Activated T-helper 2 cell treated with anti-CD3 and anti-CD28 coated beads, Interferon-gamma antibody, Interleukin-2, Interleukin-4, amounts not matched to agents 10 μg/mL and 5 μg/mL and 100 μg/mL, durations not matched to agents 14 hours and 24 hours and 36 hours (primary cell): ENCODE measurements at regions of chr1 and their contacts with region 1.

Region 1: GRCh38 chr1:211323156-211324063 is 3.2 kb upstream of the TRAF5 start:
- DNase-seq: peak; percentile 59
- H3K4me3 Mint-ChIP-seq: no peak overlapping the region
- H3K27ac Mint-ChIP-seq: peak overlapping the region; percentile 74
- H3K4me1 Mint-ChIP-seq: peaks cover 57% of the 10 kb centered on the region
- H3K27me3 Mint-ChIP-seq: no peaks in the 10 kb centered on the region

Region 2: GRCh38 chr1:211281320-211282022 is 41.9 kb before region 1 on chr1:
- intact Hi-C with region 1: loop called (anchors 1 kb)
- DNase-seq: no peak
- H3K4me3 Mint-ChIP-seq: no peak overlapping the region
- H3K27ac Mint-ChIP-seq: no peak overlapping the region
- H3K4me1 Mint-ChIP-seq: peaks cover 2% of the 10 kb centered on the region
- H3K27me3 Mint-ChIP-seq: no peaks in the 10 kb centered on the region

Region 3: DNA sequence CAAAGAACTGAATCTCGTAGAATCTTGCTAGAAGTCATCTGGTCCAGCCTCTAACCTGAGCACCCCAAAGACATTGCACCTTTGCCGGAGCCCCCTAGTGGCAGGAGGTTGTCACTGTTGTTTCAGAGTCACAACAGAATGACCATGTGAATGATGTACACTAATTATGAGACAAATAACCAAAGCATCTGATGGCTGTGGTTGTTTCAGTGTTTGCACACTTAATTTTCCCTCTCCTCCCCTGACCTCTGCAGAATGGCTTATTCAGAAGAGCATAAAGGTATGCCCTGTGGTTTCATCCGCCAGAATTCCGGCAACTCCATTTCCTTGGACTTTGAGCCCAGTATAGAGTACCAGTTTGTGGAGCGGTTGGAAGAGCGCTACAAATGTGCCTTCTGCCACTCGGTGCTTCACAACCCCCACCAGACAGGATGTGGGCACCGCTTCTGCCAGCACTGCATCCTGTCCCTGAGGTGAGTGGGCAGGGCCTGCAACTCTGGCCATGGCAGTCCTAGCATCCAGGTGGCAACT is 29.6 kb after region 1 on chr1:
- intact Hi-C with region 1: loop called (anchors 1 kb)
- DNase-seq: no peak
- H3K4me3 Mint-ChIP-seq: peak overlapping the region; percentile 55
- H3K27ac Mint-ChIP-seq: peak overlapping the region; percentile 62
- H3K4me1 Mint-ChIP-seq: peaks cover 55% of the 10 kb centered on the region
- H3K27me3 Mint-ChIP-seq: no peaks in the 10 kb centered on the region

Region 4: GRCh38 chr1:211476200-211476849 is 152.9 kb after region 1 on chr1:
- intact Hi-C with region 1: loop called (anchors 1 kb)
- DNase-seq: peak; percentile 57
- H3K4me3 Mint-ChIP-seq: no peak overlapping the region
- H3K27ac Mint-ChIP-seq: no peak overlapping the region
- H3K4me1 Mint-ChIP-seq: peaks cover 15% of the 10 kb centered on the region
- H3K27me3 Mint-ChIP-seq: peaks cover 36% of the 10 kb centered on the region

Region 5: GRCh38 chr1:211654838-211655787 is 331.7 kb after region 1 on chr1:
- intact Hi-C with region 1: loop called (anchors 1 kb)
- DNase-seq: peak; percentile 72
- H3K4me3 Mint-ChIP-seq: no peak overlapping the region
- H3K27ac Mint-ChIP-seq: no peak overlapping the region
- H3K4me1 Mint-ChIP-seq: peaks cover 5% of the 10 kb centered on the region
- H3K27me3 Mint-ChIP-seq: peaks cover 3% of the 10 kb centered on the region